CD4-positive, alpha-beta memory T cell (primary cell): ENCODE measurements at regions of chr11 and their contacts with region 1.

Region 1: DNA sequence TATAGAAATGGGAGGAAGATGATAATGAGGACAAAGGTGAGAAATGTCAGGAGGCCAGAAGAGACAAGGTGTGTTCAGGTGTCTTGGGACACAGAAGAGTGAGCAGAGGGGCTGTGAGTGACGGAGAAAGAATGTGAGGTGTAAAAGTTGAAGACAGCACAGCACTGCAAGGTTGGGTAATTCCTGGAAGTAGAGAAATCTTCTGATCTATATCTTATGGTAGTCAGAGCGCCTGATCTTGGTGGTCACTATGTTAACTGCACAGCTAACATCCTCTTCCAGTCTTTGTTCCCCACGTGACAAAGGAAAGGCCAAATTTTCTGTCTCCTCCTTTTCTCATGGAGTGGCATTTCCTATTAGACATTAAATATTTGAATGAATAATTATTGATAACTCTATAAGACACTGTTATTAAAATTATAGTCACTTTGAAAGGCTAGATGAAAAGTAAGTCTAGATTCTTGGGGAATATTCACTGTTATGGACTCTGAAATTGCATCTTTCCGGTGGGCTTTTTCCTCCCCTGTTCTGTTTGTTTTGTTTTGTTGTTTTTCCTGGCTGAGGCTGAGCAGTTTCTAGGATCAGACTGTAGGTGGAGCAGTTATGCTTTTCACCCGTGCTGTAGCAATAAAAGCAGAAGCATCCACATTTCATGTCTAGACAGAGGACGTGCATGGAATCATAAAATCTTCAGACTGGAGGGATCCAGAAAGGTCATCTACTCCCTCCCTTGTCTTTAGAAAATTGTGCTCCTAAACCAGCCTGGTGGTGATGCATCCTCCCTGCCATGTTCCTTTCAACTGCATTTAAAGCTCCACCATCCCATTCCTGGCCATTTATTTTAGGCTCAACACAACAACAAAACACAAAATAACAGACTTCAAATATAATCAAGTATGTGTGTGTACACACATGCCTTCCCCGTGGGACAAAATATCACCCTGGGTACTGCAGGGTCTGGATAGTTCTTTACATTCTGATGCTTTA is 26.6 kb downstream of the SC5D start:
- DNase-seq: peak; percentile 48 to 55 (median 53)
- H3K4me3 ChIP-seq: no peak overlapping the region
- H3K4me3 Mint-ChIP-seq: no peak overlapping the region
- H3K27ac ChIP-seq: no peak overlapping the region
- H3K27ac Mint-ChIP-seq: peak overlapping the region in 3 of 7 donors; percentile 8 to 67 (median 13)
- H3K4me1 ChIP-seq: peaks cover 5% of the 10 kb centered on the region
- H3K4me1 Mint-ChIP-seq: peaks cover 17 to 21% (median 19%) of the 10 kb centered on the region in 4 donors
- H3K27me3 ChIP-seq: no peaks in the 10 kb centered on the region
- H3K27me3 Mint-ChIP-seq: peaks cover 0 to 1% of the 10 kb centered on the region in 2 donors

Region 2: DNA sequence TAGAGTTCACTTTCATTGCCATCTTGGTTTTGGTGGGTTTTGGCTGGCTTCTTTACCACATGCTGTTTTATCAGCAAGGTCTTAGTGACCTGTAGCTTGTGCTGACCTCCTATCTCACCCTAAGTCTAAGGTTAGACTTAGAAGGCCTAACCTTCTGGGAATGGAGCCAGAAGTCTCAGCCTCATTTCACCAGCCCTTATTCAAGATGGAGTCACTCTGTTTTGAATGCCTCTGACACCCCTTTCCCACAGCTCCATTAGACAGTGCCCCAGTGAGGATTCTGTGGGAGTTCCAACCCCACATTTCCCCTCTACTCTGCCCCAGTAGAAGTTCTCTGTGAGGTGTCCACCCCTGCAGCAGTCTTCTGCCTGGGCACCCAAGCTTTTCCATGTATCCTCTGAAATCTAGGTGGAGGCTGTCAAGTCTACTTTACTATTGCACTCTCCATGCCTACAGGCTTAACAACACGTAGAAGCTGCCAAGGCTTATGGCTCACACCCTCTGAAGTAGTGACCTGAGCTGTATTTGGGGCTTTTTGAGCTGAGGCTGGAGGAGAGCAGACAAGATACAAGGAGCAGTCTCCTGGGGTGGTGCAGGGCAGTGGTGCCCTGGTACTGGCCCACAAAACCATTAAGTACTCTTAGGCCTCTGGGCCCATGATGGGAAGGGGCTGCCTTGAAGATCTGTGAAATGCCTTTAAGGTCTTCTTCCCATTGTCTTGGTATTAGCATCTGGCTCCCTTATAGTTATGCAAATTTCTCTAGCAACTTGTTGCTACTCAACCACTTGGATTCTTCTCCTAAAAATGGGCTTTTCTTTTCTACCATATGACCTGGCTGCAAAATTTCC is 92.5 kb before region 1 on chr11:
- CTCF ChIA-PET with region 1: no interaction called
- POLR2A ChIA-PET with region 1: no interaction called
- intact Hi-C with region 1: no loop called
- DNase-seq: no peak
- H3K4me3 ChIP-seq: no peak overlapping the region
- H3K4me3 Mint-ChIP-seq: no peak overlapping the region
- H3K27ac ChIP-seq: no peak overlapping the region
- H3K27ac Mint-ChIP-seq: no peak overlapping the region
- H3K4me1 ChIP-seq: no peaks in the 10 kb centered on the region
- H3K4me1 Mint-ChIP-seq: no peaks in the 10 kb centered on the region
- H3K27me3 ChIP-seq: peaks cover 7% of the 10 kb centered on the region
- H3K27me3 Mint-ChIP-seq: peaks cover 10 to 15% of the 10 kb centered on the region in 2 donors

Region 3: DNA sequence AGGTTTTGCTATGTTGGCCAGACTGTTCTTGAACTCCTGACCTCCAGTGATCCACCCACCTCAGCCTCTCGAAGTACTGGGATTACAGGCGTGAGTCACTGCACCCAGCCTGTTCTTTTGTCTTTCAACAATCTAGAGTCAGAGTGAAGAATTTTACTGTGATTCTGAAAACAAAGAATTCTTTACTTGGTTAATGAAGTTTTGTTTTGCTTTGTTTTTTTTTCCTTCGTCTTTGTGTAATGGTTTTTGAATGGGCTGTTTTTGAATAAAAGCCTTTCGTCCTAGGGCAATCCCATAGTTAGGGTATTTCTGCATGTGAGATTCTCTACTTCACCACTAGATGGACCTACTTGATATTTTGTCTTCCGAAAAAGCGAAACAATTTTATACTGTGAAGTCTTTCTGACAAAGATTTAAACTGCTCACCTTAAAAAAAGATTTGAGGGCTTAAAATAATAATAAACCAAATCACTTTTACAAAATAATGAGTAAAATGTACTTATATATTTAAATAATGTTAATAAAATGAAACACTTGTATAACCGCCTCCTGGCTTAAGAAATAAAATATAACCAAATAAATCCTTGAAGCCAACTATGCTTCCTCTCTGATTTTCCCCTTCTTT is 70.0 kb before region 1 on chr11:
- CTCF ChIA-PET with region 1: no interaction called
- POLR2A ChIA-PET with region 1: no interaction called
- intact Hi-C with region 1: loop called (anchors 2 kb)
- DNase-seq: peak; percentile 30 to 43 (median 35)
- H3K4me3 ChIP-seq: no peak overlapping the region
- H3K4me3 Mint-ChIP-seq: no peak overlapping the region
- H3K27ac ChIP-seq: no peak overlapping the region
- H3K27ac Mint-ChIP-seq: peak overlapping the region in 2 of 7 donors; percentile 0 to 18
- H3K4me1 ChIP-seq: no peaks in the 10 kb centered on the region
- H3K4me1 Mint-ChIP-seq: peaks cover 0 to 4% (median 1%) of the 10 kb centered on the region in 4 donors
- H3K27me3 ChIP-seq: no peaks in the 10 kb centered on the region
- H3K27me3 Mint-ChIP-seq: peaks cover 8% of the 10 kb centered on the region in 2 donors

Region 4: DNA sequence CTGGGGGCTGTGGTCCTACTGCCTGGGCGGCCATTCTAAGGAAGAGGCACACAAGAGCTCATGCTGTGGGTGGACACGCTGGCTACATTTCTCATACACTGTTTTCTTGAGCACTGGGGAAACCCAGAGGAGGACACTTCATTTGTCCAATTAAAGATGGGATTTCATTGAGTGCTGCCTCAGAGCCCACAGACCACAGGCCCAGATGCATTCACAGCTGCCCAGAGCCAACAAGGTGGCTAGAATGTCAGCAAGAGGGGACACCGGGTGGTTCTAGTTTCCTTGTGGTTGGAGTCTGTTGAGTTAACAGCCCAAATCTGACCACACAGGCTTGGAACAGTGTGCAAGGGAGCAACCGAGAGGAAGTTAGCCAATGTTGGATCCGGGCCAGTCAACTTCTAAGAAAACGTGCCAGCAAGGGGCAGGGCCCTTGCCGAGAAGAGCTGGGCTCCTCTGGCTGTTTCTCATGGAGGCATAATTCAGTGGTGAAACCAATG is 98.0 kb after region 1 on chr11:
- CTCF ChIA-PET with region 1: interaction called, 3 read pairs
- POLR2A ChIA-PET with region 1: no interaction called
- intact Hi-C with region 1: loop called (anchors 2 kb)
- DNase-seq: peak; percentile 58 to 72 (median 63)
- H3K4me3 ChIP-seq: no peak overlapping the region
- H3K4me3 Mint-ChIP-seq: peak overlapping the region in 7 of 8 donors; percentile 49 to 81 (median 68)
- H3K27ac ChIP-seq: peak overlapping the region; percentile 36
- H3K27ac Mint-ChIP-seq: peak overlapping the region; percentile 91 to 96 (median 93)
- H3K4me1 ChIP-seq: peaks cover 72% of the 10 kb centered on the region
- H3K4me1 Mint-ChIP-seq: peaks cover 51 to 85% (median 71%) of the 10 kb centered on the region in 4 donors
- H3K27me3 ChIP-seq: no peaks in the 10 kb centered on the region
- H3K27me3 Mint-ChIP-seq: no peaks in the 10 kb centered on the region

Region 5: GRCh38 chr11:121482231-121483129 is 163.3 kb after region 1 on chr11:
- CTCF ChIA-PET with region 1: interaction called, 6 read pairs
- POLR2A ChIA-PET with region 1: no interaction called
- intact Hi-C with region 1: loop called (anchors 5 kb)
- DNase-seq: peak; percentile 67 to 89 (median 72)
- H3K4me3 ChIP-seq: peak overlapping the region; percentile 14 to 30
- H3K4me3 Mint-ChIP-seq: peak overlapping the region; percentile 75 to 86 (median 82)
- H3K27ac ChIP-seq: peak overlapping the region; percentile 53
- H3K27ac Mint-ChIP-seq: peak overlapping the region; percentile 87 to 97 (median 92)
- H3K4me1 ChIP-seq: peaks cover 71% of the 10 kb centered on the region
- H3K4me1 Mint-ChIP-seq: peaks cover 48 to 85% (median 68%) of the 10 kb centered on the region in 4 donors
- H3K27me3 ChIP-seq: no peaks in the 10 kb centered on the region
- H3K27me3 Mint-ChIP-seq: no peaks in the 10 kb centered on the region

Region 6: GRCh38 chr11:121733858-121734257 is 414.7 kb after region 1 on chr11:
- CTCF ChIA-PET with region 1: no interaction called
- POLR2A ChIA-PET with region 1: no interaction called
- intact Hi-C with region 1: no loop called
- DNase-seq: no peak
- H3K4me3 ChIP-seq: no peak overlapping the region
- H3K4me3 Mint-ChIP-seq: no peak overlapping the region
- H3K27ac ChIP-seq: no peak overlapping the region
- H3K27ac Mint-ChIP-seq: peak overlapping the region in 1 of 7 donors; percentile 29
- H3K4me1 ChIP-seq: no peaks in the 10 kb centered on the region
- H3K4me1 Mint-ChIP-seq: no peaks in the 10 kb centered on the region
- H3K27me3 ChIP-seq: no peaks in the 10 kb centered on the region
- H3K27me3 Mint-ChIP-seq: peaks cover 0 to 1% of the 10 kb centered on the region in 2 donors